ENCODE measurements at regions of chr7 and their contacts with region 1.

Region 1: GRCh38 chr7:50142425-50143017 is 49.5 kb upstream of the ZPBP start:
- DNase-seq: peak; percentile 29
- H3K4me3 Mint-ChIP-seq: no peak overlapping the region
- H3K27ac Mint-ChIP-seq: no peak overlapping the region
- H3K4me1 Mint-ChIP-seq: no peaks in the 10 kb centered on the region
- H3K27me3 Mint-ChIP-seq: peaks cover 46% of the 10 kb centered on the region
- CTCF ChIP-seq: peak; percentile 73

Region 2: GRCh38 chr7:50037086-50037485 is 105.4 kb before region 1 on chr7:
- CTCF ChIA-PET with region 1: no interaction called
- intact Hi-C with region 1: no loop called
- DNase-seq: no peak
- H3K4me3 Mint-ChIP-seq: no peak overlapping the region
- H3K27ac Mint-ChIP-seq: no peak overlapping the region
- H3K4me1 Mint-ChIP-seq: no peaks in the 10 kb centered on the region
- H3K27me3 Mint-ChIP-seq: peaks cover 11% of the 10 kb centered on the region
- CTCF ChIP-seq: no peak

Region 3: DNA sequence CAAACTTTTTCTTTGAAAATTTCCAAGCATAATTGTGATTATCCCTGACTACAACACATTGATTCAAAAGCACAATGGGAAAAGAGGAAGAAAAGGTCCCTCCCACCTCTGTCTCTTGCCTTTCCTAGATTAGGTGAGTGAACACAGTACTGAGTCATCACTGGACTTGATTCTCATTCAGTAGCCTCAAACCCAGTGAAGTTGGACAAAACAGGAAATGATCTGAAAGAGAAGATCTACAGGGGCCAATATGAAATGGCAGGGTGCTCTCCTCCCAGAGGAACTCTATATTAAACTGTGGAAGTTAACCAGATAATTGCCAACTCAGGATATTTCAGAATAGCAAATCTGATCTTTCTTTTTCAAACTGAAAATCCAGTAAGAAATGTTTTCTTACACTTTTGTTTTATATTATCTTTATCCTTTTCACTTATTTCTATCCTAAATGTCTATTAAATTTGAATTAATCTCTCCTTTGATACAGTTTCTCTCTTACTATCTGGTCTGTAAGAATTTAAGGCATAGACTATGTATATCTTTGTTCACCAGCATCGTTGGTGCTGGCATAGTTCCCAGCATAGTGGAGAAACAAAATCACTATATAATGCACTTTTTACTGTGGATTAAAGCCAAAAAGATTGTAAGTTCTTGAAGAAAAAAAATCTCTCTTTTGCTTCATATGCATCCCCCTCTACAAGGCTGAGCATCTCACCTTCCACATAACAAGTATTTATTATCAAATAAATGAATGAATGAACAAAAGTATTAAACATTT is 120.6 kb after region 1 on chr7:
- CTCF ChIA-PET with region 1: no interaction called
- intact Hi-C with region 1: no loop called
- DNase-seq: no peak
- H3K4me3 Mint-ChIP-seq: no peak overlapping the region
- H3K27ac Mint-ChIP-seq: no peak overlapping the region
- H3K4me1 Mint-ChIP-seq: no peaks in the 10 kb centered on the region
- H3K27me3 Mint-ChIP-seq: peaks cover 81% of the 10 kb centered on the region
- CTCF ChIP-seq: no peak

Region 4: GRCh38 chr7:50369143-50370026 is 226.9 kb after region 1 on chr7:
- CTCF ChIA-PET with region 1: no interaction called
- intact Hi-C with region 1: loop called (anchors 1 kb)
- DNase-seq: no peak
- H3K4me3 Mint-ChIP-seq: no peak overlapping the region
- H3K27ac Mint-ChIP-seq: no peak overlapping the region
- H3K4me1 Mint-ChIP-seq: no peaks in the 10 kb centered on the region
- H3K27me3 Mint-ChIP-seq: peaks cover 83% of the 10 kb centered on the region
- CTCF ChIP-seq: peak; percentile 68

Region 5: DNA sequence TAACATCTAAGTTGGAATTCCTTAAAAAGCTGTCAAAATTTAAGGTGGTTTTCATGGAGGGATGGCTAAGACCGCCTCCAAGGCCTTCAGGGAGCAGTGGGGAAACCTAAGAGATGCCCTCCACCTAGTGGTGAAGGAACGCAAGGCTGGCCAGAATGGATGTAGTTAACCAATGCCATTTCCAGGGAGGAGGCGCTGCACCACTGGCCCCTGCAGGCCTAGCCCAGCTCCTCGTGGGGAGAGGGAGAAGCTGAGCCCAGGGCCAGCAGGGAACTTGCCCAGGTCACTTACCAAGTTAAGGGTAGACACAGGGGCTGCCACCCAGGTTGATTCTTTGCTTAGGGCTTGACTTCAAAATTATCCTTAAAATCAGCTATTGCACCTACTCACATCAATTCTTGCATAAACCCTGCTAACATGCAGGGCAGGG is 275.6 kb after region 1 on chr7:
- CTCF ChIA-PET with region 1: no interaction called
- intact Hi-C with region 1: loop called (anchors 2 kb)
- DNase-seq: peak; percentile 90
- H3K4me3 Mint-ChIP-seq: no peak overlapping the region
- H3K27ac Mint-ChIP-seq: no peak overlapping the region
- H3K4me1 Mint-ChIP-seq: no peaks in the 10 kb centered on the region
- H3K27me3 Mint-ChIP-seq: peaks cover 16% of the 10 kb centered on the region
- CTCF ChIP-seq: peak; percentile 96

Measured in Calu3 (cell line).